SK-N-SH (cell line): ENCODE measurements at regions of chr2 and their contacts with region 1.

Region 1: GRCh38 chr2:46650556-46651001 is 171.2 kb downstream of the TMEM247 start:
- DNase-seq: peak; percentile 71
- H3K4me3 ChIP-seq: no peak overlapping the region; a peak in 1 of 4 replicates
- H3K27ac ChIP-seq: no peak overlapping the region
- H3K4me1 ChIP-seq: peaks cover 15 to 19% of the 10 kb centered on the region in 2 experiments
- H3K27me3 ChIP-seq: no peaks in the 10 kb centered on the region
- CTCF ChIP-seq: peak; percentile 99
- EP300 ChIP-seq: no peak
- RAD21 ChIP-seq: peak; percentile 99

Region 2: DNA sequence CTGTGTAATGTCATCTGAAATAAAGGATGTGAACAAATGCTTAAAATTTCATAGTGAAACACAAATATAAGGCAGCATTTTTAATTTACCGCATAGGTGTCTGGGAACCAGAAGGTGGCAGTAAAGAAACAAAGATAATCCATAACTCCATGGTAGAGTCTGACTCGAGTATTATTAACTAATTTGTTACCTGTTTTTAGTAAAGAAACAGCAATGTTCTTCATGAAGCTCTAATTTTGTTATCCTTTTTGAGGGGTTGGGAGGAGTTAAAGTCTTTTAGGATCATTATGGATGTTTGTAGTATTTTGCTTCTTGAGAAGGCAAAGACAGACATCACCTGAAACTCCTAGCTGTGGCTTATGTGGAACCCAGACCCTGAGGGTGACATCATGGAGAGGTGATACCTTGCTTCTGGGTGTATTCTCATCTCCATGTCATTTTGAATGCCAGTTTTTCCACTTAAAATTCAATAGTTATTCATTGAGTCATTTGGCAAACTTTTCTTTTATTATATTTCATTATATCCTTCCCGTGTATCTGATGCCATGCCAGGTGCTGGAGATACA is 639.6 kb before region 1 on chr2:
- CTCF ChIA-PET with region 1: interaction called, 16 read pairs
- POLR2A ChIA-PET with region 1: no interaction called
- DNase-seq: peak; percentile 72
- H3K4me3 ChIP-seq: no peak overlapping the region
- H3K27ac ChIP-seq: peak overlapping the region in 1 of 2 experiments; percentile 28; a peak in 2 of 4 replicates
- H3K4me1 ChIP-seq: peaks cover 8 to 23% of the 10 kb centered on the region in 2 experiments; a peak in 3 of 4 replicates
- H3K27me3 ChIP-seq: no peaks in the 10 kb centered on the region
- CTCF ChIP-seq: peak; percentile 92
- EP300 ChIP-seq: no peak
- RAD21 ChIP-seq: peak; percentile 93

Region 3: DNA sequence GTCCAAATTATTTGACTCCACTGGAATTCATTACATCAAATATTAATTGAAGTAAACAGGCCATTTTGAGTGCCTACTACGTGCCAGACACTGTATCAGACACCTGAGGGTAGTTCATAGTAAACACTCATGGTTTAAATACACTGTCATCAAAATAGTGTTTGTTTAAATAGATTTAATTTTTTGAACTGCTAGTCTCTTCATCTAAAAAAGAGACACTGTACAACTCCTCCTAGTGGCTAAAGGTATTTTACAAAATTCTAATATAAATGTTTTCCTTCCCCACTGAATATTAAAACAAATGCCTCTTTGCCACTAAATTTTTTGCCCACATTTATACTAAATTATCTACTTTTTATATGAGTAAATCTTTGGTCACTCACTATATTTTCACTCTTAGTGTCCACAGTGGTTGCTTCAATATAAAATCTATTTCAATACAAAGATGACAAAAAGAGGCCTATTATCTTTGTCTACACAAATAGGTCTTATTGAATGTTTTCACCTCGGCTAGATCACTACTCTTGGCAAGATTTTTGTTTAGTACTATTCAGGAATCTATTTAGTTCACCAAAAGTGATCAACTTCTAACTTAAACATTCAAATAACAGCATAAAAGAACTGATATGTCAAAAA is 49.1 kb before region 1 on chr2:
- CTCF ChIA-PET with region 1: interaction called, 17 read pairs
- POLR2A ChIA-PET with region 1: no interaction called
- DNase-seq: peak; percentile 19
- H3K4me3 ChIP-seq: no peak overlapping the region
- H3K27ac ChIP-seq: no peak overlapping the region
- H3K4me1 ChIP-seq: no peaks in the 10 kb centered on the region
- H3K27me3 ChIP-seq: no peaks in the 10 kb centered on the region
- CTCF ChIP-seq: peak; percentile 75
- EP300 ChIP-seq: no peak
- RAD21 ChIP-seq: peak; percentile 56

Region 4: DNA sequence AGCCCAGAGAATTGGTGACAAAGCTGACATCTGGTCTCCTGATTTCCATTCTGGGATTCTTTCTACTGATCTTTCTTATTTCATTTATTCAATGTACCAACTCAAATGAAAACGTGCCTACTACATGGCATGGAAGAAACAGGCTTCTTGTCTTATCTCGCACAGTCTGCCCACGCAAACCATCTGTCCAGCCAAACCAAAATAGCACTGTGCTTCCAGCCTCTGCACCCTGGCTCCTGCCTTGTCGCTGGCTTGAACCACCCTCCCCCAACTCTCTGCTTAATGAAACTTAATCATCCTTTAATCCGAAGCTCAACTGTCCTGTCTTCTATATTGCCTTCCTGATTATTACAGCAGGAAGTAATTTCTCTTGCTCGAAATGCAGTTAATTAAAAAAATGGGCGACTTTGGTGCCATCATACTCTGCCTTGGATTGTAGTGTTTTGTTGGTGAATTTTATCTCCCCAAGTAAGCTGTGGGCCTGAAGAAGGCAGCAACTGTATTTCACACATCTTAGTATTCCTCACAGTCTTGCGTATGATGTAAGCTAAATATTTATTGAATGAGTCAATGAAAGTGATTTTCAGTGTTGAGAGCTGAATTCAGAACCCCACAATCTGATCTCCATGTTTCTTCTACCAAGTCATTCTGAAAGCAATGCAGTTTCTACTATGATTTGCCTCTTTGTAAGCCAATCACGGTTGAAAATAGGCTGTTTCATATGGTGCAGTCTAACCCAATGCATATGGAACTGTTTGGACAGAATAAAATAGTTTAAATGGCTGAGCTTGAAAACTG is 19.6 kb after region 1 on chr2:
- CTCF ChIA-PET with region 1: interaction called, 14 read pairs
- POLR2A ChIA-PET with region 1: no interaction called
- DNase-seq: no peak
- H3K4me3 ChIP-seq: no peak overlapping the region
- H3K27ac ChIP-seq: peak overlapping the region in 1 of 2 experiments; percentile 11; a peak in 2 of 4 replicates
- H3K4me1 ChIP-seq: peaks cover 12 to 13% of the 10 kb centered on the region in 2 experiments; a peak in 3 of 4 replicates
- H3K27me3 ChIP-seq: no peaks in the 10 kb centered on the region
- CTCF ChIP-seq: no peak
- EP300 ChIP-seq: no peak
- RAD21 ChIP-seq: no peak

Region 5: GRCh38 chr2:46812361-46813024 is 161.9 kb after region 1 on chr2:
- CTCF ChIA-PET with region 1: interaction called, 13 read pairs
- POLR2A ChIA-PET with region 1: no interaction called
- DNase-seq: peak; percentile 50
- H3K4me3 ChIP-seq: peak overlapping the region; percentile 19 to 26; a peak in 2 of 4 replicates
- H3K27ac ChIP-seq: peak overlapping the region; percentile 94 to 97
- H3K4me1 ChIP-seq: peaks cover 34 to 42% of the 10 kb centered on the region in 2 experiments
- H3K27me3 ChIP-seq: no peaks in the 10 kb centered on the region
- CTCF ChIP-seq: 0 out of 2 replicates have a peak, but pooled peaks have one; percentile 11
- EP300 ChIP-seq: peak; percentile 89 to 97
- RAD21 ChIP-seq: no peak

Region 6: DNA sequence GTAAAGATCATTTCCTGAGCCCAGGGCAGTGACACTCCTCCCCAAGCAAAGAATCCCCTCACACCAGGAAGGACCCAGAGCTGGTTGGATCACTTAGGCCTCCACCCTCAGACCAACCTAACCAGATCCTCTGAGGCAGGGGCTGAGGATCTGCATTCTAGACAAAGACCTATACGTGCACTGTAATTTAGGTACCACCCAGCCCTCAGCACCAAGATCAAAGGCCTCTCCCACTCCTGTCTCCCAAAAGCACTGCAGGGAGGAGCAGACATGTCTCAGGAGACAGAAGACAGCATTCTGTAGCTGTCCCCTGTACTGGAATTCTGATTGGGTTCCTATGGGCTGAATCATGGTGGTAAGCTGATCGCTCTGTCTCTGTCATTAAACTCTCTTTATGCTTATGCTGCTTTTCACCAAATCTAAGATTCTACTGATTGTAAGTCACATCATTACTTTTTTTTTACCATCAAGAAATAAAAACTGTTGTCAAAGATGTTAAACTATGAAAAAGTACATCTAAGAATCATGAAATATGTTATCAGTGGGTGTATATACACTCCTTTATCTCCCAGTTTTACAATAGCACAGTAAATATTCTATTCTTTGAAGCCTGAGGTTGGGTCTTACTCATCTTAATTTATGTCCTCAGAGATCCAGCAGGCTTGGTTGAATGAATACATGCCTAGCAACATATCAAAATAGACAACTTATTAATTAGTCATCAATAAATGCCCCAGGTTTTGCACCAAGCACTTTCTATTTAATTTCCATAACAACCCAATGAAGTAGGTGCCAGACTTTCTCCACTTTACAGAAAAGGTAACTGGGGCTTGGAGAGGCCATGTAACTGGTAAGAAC is 236.7 kb after region 1 on chr2:
- CTCF ChIA-PET with region 1: interaction called, 99 read pairs
- POLR2A ChIA-PET with region 1: no interaction called
- DNase-seq: no peak
- H3K4me3 ChIP-seq: no peak overlapping the region
- H3K27ac ChIP-seq: peak overlapping the region in 1 of 2 experiments; percentile 85; a peak in 2 of 4 replicates
- H3K4me1 ChIP-seq: peaks cover 0 to 35% of the 10 kb centered on the region in 2 experiments; a peak in 2 of 4 replicates
- H3K27me3 ChIP-seq: no peaks in the 10 kb centered on the region
- CTCF ChIP-seq: no peak
- EP300 ChIP-seq: no peak; a peak in 1 of 4 replicates
- RAD21 ChIP-seq: no peak

Region 7: GRCh38 chr2:46942139-46942517 is 291.5 kb after region 1 on chr2:
- CTCF ChIA-PET with region 1: no interaction called
- POLR2A ChIA-PET with region 1: no interaction called
- DNase-seq: peak; percentile 42
- H3K4me3 ChIP-seq: peak overlapping the region; percentile 76 to 95
- H3K27ac ChIP-seq: no peak overlapping the region
- H3K4me1 ChIP-seq: peaks cover 10 to 12% of the 10 kb centered on the region in 2 experiments; a peak in 2 of 4 replicates
- H3K27me3 ChIP-seq: no peaks in the 10 kb centered on the region
- CTCF ChIP-seq: no peak
- EP300 ChIP-seq: no peak
- RAD21 ChIP-seq: no peak